K562 (cell line): ENCODE measurements at regions of chr17 and their contacts with region 1.

Region 1: DNA sequence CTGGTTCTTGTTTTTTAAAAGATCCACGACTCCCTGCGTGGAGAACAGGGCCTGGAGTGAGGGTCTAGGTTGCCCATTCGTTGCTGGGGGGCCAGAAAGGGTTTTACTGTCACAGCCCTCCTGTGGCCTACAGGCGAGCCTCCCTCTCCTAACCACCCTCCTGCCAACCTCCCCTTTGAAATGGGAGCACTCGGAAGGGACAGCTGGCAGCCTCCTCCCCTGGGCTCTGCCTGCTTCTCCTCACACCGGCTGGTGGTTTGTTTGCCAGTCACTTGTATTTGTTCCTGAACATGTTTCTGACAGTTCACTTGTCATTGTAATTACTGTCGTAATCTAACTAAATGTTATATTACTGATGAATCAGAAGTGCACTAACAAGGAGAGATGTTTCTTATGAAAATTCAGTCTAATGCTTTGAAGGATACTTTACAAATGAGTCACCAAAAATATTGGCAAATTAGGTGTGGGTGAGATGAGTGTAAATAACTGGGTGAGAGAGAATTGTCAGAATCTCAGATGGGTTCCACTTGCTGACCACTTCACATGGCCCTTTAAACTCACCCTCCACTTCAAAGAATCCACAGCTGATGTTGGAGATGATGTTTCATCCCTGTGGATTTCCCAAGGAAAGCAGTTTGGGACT is 2.7 kb upstream of the SPPL2C start:
- DNase-seq: no peak
- ATAC-seq: no peak
- H3K4me3 ChIP-seq: no peak overlapping the region
- H3K27ac ChIP-seq: no peak overlapping the region
- H3K4me1 ChIP-seq: peaks cover 0 to 9% of the 10 kb centered on the region in 2 experiments; a peak in 1 of 5 replicates
- H3K27me3 ChIP-seq: peaks cover 12 to 58% of the 10 kb centered on the region in 2 experiments; a peak in 4 of 5 replicates
- CTCF ChIP-seq: no peak
- EP300 ChIP-seq: no peak
- POLR2A ChIP-seq: no peak
- RAD21 ChIP-seq: no peak

Region 2: GRCh38 chr17:45410144-45411091 is 431.6 kb before region 1 on chr17:
- CTCF ChIA-PET with region 1: no interaction called
- POLR2A ChIA-PET with region 1: no interaction called
- in situ Hi-C with region 1: loop called (anchors 25 kb)
- intact Hi-C with region 1: no loop called
- DNase-seq: no peak
- ATAC-seq: no peak
- H3K4me3 ChIP-seq: no peak overlapping the region
- H3K27ac ChIP-seq: no peak overlapping the region
- H3K4me1 ChIP-seq: peaks cover 0 to 14% of the 10 kb centered on the region in 2 experiments; a peak in 4 of 5 replicates
- H3K27me3 ChIP-seq: no peaks in the 10 kb centered on the region
- CTCF ChIP-seq: no peak
- EP300 ChIP-seq: no peak
- POLR2A ChIP-seq: no peak
- RAD21 ChIP-seq: no peak

Region 3: DNA sequence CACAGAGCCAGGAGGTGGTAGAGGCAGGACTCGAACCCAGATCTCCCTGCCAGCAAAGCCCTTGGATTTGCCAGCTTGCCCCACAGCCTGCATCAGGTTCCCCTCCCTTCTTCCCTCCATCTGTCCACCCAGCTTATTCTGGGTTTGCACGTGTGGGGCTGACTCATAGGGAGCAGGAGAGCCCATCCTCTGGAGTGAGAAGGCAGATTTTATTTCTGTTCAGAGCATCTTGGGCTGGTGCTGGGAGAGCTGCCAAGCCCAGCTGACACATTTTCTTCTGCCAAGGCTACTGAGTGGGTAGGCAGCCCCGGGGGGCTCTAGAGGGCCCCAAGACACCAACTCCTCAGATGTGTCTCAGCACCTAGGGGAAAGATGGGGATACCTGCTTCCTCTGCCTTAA is 164.2 kb before region 1 on chr17:
- CTCF ChIA-PET with region 1: no interaction called
- POLR2A ChIA-PET with region 1: no interaction called
- in situ Hi-C with region 1: no loop called
- intact Hi-C with region 1: no loop called
- DNase-seq: no peak
- ATAC-seq: no peak
- H3K4me3 ChIP-seq: no peak overlapping the region
- H3K27ac ChIP-seq: no peak overlapping the region
- H3K4me1 ChIP-seq: no peaks in the 10 kb centered on the region
- H3K27me3 ChIP-seq: peaks cover 14 to 40% of the 10 kb centered on the region in 2 experiments
- CTCF ChIP-seq: no peak
- EP300 ChIP-seq: no peak
- POLR2A ChIP-seq: no peak
- RAD21 ChIP-seq: no peak